ENCODE measurements at regions of chr1 and their contacts with region 1.

Region 1: DNA sequence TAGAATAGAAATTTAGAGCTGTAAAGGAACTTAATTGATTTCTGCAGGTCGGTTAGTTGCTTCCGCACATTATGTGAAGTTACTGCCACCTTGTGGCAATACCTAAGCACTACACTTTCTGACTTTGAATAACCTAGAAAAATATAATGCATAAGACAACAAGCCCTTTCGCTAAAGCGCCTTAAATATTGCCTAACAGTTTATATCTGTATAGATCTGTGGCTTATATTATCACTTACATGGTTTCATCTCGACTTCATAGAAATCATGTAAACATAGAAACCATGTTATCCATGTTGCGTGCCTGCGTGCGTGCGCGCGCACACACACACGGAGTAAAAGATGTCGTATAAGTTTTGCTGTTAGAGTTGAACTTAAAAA is 10.9 kb upstream of the IFI16 start:
- DNase-seq: peak; percentile 87
- H3K4me3 Mint-ChIP-seq: peak overlapping the region; percentile 7
- H3K27ac Mint-ChIP-seq: no peak overlapping the region
- H3K4me1 Mint-ChIP-seq: peaks cover 32% of the 10 kb centered on the region
- H3K27me3 Mint-ChIP-seq: no peaks in the 10 kb centered on the region

Region 2: DNA sequence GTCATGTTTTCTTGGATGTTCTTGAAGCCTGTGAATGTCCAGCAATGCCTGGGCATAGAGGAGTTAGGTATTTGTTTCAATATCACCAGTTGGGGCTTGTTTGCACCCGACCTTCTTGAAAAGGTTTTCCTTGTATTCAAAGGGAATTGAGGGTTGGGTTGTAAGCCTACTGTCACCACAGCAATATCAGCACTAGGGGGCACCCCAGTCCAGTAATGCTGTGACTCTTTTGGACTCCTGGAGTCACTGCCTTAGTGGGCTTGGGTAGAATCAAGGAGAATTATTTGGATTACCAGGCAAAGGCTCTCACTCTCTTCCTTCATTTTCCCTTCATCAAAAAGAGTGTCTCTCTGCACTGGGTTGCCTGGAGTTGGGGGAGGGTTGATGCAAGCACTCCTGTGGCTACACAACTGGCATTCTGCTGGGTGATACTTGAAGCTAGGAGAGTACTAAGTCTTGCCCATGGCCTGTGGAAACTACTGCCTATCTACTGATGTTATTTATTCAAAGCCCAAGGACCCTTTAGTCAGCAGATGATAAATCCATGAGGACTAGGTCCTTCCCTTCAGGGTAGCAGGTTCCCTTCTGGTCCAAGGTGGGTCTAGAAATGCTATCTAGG is 492.3 kb before region 1 on chr1:
- intact Hi-C with region 1: loop called (anchors 1 kb)
- DNase-seq: peak; percentile 83
- H3K4me3 Mint-ChIP-seq: no peak overlapping the region
- H3K27ac Mint-ChIP-seq: no peak overlapping the region
- H3K4me1 Mint-ChIP-seq: no peaks in the 10 kb centered on the region
- H3K27me3 Mint-ChIP-seq: peaks cover 32% of the 10 kb centered on the region

Region 3: DNA sequence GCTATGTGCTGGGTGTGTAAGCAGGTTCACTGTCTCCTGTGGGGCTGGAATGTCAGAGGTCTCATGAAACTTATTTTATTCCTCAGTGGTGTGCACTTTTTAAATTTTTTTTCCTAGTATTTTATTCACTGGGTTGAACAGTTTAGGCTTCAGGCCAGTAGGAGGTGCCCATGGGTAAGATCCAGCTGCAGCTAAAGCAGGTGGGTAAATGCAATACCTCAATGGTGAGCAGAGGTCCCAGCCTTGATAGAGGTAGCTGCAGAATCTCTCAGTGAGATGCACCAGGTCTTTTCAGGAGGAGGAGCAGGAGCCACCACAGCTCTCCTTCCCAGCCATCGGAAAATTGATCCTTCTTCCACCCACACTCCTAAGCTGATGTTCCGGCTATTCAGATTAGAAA is 205.2 kb before region 1 on chr1:
- intact Hi-C with region 1: loop called (anchors 2 kb)
- DNase-seq: peak; percentile 79
- H3K4me3 Mint-ChIP-seq: no peak overlapping the region
- H3K27ac Mint-ChIP-seq: no peak overlapping the region
- H3K4me1 Mint-ChIP-seq: no peaks in the 10 kb centered on the region
- H3K27me3 Mint-ChIP-seq: peaks cover 21% of the 10 kb centered on the region

Region 4: GRCh38 chr1:158893654-158894053 is 105.1 kb before region 1 on chr1:
- intact Hi-C with region 1: no loop called
- DNase-seq: no peak
- H3K4me3 Mint-ChIP-seq: no peak overlapping the region
- H3K27ac Mint-ChIP-seq: no peak overlapping the region
- H3K4me1 Mint-ChIP-seq: no peaks in the 10 kb centered on the region
- H3K27me3 Mint-ChIP-seq: peaks cover 11% of the 10 kb centered on the region

Region 5: DNA sequence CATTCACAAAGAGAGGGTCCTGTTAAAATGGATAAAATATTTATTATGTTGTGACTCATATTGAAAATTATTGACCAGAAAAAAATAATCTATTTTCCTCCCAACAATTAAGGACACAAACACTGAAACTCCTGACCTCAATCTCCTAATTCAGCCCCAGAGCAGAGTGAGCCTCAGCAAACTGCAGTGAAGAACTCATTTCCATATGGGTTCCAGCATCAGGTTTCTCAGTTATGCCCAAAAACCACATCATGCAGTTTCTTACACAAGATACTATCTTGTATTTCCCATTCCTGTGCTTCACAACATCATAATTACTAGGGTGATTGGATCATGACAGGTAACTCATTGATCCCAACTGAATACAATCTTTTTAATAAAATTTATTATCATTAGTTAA is 52.0 kb before region 1 on chr1:
- intact Hi-C with region 1: no loop called
- DNase-seq: no peak
- H3K4me3 Mint-ChIP-seq: no peak overlapping the region
- H3K27ac Mint-ChIP-seq: no peak overlapping the region
- H3K4me1 Mint-ChIP-seq: peaks cover 3% of the 10 kb centered on the region
- H3K27me3 Mint-ChIP-seq: peaks cover under 1% of the 10 kb centered on the region

Region 6: DNA sequence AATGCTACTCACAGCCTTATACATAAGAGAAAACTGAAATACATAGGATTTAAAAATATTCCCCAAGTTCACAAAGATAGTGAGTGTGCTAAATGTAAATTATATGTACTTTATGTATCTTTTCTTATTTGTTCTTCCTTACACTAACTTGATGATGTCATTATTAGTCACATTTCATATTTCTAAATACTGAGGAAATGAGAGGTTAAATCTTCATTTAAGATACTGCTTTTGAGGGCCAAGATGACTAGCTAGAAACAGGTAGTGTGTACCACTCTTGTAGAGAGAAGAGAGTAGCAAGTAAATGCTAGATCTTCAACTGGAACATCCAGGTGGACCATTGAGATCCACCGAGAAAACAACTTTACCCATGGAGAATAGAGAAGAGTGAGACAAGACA is 37.6 kb before region 1 on chr1:
- intact Hi-C with region 1: no loop called
- DNase-seq: no peak
- H3K4me3 Mint-ChIP-seq: no peak overlapping the region
- H3K27ac Mint-ChIP-seq: no peak overlapping the region
- H3K4me1 Mint-ChIP-seq: peaks cover 3% of the 10 kb centered on the region
- H3K27me3 Mint-ChIP-seq: no peaks in the 10 kb centered on the region

Region 7: DNA sequence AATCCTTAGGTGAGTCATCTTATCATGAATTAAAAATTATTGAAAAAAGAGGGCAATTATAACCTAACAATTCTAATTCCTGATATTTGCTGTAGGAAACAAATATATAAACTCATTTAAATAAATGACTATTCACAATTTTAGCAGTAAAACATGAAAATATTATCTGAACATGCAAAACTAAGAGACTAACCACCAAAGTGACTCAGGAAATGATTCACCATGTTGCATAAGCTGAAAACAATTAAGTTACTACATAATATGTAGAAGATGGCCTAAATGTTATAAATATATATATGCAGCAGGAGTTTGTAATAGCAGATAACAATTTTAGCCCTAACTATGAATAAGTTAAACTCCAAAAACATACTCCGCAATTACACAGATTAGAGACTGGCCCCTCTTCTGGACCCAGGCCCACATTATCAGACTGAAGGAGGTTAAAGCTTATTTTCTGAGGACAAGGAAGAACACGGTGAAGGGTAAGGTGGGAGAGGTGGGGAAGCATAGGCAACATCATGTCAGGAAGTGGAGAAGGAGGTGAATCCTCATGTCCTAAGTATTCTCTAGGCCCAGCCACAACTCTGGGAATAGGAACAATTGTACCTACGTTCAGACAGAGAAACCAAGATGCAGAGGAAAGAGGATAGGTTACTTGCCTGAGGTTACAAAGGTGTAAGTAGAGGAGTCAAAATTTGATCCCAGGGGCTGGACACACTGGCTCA is 93.4 kb after region 1 on chr1:
- intact Hi-C with region 1: no loop called
- DNase-seq: no peak
- H3K4me3 Mint-ChIP-seq: no peak overlapping the region
- H3K27ac Mint-ChIP-seq: peak overlapping the region; percentile 62
- H3K4me1 Mint-ChIP-seq: peaks cover 40% of the 10 kb centered on the region
- H3K27me3 Mint-ChIP-seq: peaks cover 6% of the 10 kb centered on the region

Measured in activated CD4-positive, alpha-beta T cell treated with anti-CD3 and anti-CD28 coated beads, Interleukin-2, amount 10 ng/mL, durations not matched to agents 24 days and 14 days (primary cell).